Naive thymus-derived CD4-positive, alpha-beta T cell (primary cell): ENCODE measurements at regions of chr11 and their contacts with region 1.

Region 1: GRCh38 chr11:66344550-66345315 is at the start of gene BRMS1:
- DNase-seq: peak; percentile 85 to 98 (median 93)
- ATAC-seq: peak; percentile 94
- H3K4me3 ChIP-seq: peak within 1 kb of the TSS; percentile 73
- H3K4me3 Mint-ChIP-seq: peak within 1 kb of the TSS; percentile 94 to 98 (median 96)
- H3K27ac ChIP-seq: peak within 1 kb of the TSS; percentile 92
- H3K27ac Mint-ChIP-seq: peak within 1 kb of the TSS; percentile 91 to 98 (median 96)
- H3K4me1 ChIP-seq: peaks cover 30 to 36% of the 10 kb centered on the region in 2 donors
- H3K4me1 Mint-ChIP-seq: peaks cover 25 to 62% (median 52%) of the 10 kb centered on the region in 7 donors
- H3K27me3 ChIP-seq: no peaks in the 10 kb centered on the region
- H3K27me3 Mint-ChIP-seq: peaks cover 0 to 4% (median 0%) of the 10 kb centered on the region in 5 donors
- total RNA-seq, gene BRMS1: 35.9 to 50.8 (median 48.4) TPM

Region 2: DNA sequence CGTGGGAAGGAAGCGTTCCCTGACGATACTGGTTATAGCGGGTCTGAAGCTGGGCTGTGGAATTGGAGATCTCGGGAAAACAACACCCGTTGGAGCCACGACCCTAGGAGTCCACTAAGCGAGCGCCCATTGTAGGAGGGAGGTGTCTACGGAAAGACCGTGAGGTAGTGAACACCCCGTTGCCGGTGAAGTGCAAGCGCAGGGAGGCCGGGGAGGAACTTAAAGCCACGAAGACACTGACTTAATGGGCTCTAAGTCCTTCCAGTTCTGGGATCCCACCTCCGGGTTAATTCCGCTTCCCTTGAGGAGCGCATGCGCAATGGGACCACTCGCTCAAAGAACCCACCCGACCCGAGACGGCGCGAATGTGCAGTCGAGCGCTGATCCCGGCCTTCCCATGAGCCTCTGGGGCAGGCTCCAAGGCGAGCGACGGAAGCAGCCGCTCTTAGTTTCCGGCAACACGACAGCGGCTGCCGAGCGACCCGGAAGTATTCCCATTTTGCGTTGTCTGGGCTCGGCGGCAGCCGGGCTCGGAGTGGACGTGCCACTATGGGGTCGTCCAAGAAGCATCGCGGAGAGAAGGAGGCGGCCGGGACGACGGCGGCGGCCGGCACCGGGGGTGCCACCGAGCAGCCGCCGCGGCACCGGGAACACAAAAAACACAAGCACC is 383.4 kb before region 1 on chr11 and contains the start of gene SART1:
- CTCF ChIA-PET with region 1: no interaction called
- POLR2A ChIA-PET with region 1: no interaction called
- intact Hi-C with region 1: no loop called
- DNase-seq: peak; percentile 81 to 97 (median 94)
- ATAC-seq: peak; percentile 96
- H3K4me3 ChIP-seq: peak within 1 kb of the TSS; percentile 83
- H3K4me3 Mint-ChIP-seq: peak within 1 kb of the TSS; percentile 93 to 99 (median 98)
- H3K27ac ChIP-seq: peak within 1 kb of the TSS; percentile 96
- H3K27ac Mint-ChIP-seq: peak within 1 kb of the TSS; percentile 96 to 99 (median 98)
- H3K4me1 ChIP-seq: peaks cover 27 to 38% of the 10 kb centered on the region in 2 donors
- H3K4me1 Mint-ChIP-seq: peaks cover 23 to 64% (median 54%) of the 10 kb centered on the region in 7 donors
- H3K27me3 ChIP-seq: no peaks in the 10 kb centered on the region
- H3K27me3 Mint-ChIP-seq: no peaks in the 10 kb centered on the region
- total RNA-seq, gene SART1: 65.9 to 102 (median 90.8) TPM

Region 3: GRCh38 chr11:66317723-66318599 is 26.8 kb before region 1 on chr11:
- CTCF ChIA-PET with region 1: interaction called, 40 read pairs
- POLR2A ChIA-PET with region 1: interaction called, 68 read pairs
- intact Hi-C with region 1: loop called in 1 of 2 experiments (anchors 1 kb)
- DNase-seq: peak in 7 of 9 donors; percentile 79 to 96 (median 86)
- ATAC-seq: peak; percentile 93
- H3K4me3 ChIP-seq: peak overlapping the region; percentile 54
- H3K4me3 Mint-ChIP-seq: peak overlapping the region; percentile 45 to 89 (median 83)
- H3K27ac ChIP-seq: peak overlapping the region; percentile 99
- H3K27ac Mint-ChIP-seq: peak overlapping the region; percentile 88 to 100 (median 99)
- H3K4me1 ChIP-seq: peaks cover 32 to 60% of the 10 kb centered on the region in 2 donors
- H3K4me1 Mint-ChIP-seq: peaks cover 39 to 78% (median 63%) of the 10 kb centered on the region in 7 donors
- H3K27me3 ChIP-seq: no peaks in the 10 kb centered on the region
- H3K27me3 Mint-ChIP-seq: peaks cover 0 to 9% (median 0%) of the 10 kb centered on the region in 5 donors

Region 4: GRCh38 chr11:66371627-66372415 is 27.1 kb after region 1 on chr11 and contains the start of gene SLC29A2:
- CTCF ChIA-PET with region 1: interaction called, 3 read pairs
- POLR2A ChIA-PET with region 1: interaction called, 58 read pairs
- intact Hi-C with region 1: loop called (anchors 1 kb)
- DNase-seq: peak; percentile 53 to 85 (median 80)
- ATAC-seq: peak; percentile 89
- H3K4me3 ChIP-seq: peak within 1 kb of the TSS; percentile 72
- H3K4me3 Mint-ChIP-seq: peak within 1 kb of the TSS; percentile 81 to 96 (median 88)
- H3K27ac ChIP-seq: peak within 1 kb of the TSS; percentile 83
- H3K27ac Mint-ChIP-seq: peak within 1 kb of the TSS; percentile 79 to 95 (median 90)
- H3K4me1 ChIP-seq: peaks cover 4 to 8% of the 10 kb centered on the region in 2 donors
- H3K4me1 Mint-ChIP-seq: peaks cover 0 to 24% (median 13%) of the 10 kb centered on the region in 7 donors
- H3K27me3 ChIP-seq: no peaks in the 10 kb centered on the region
- H3K27me3 Mint-ChIP-seq: peaks cover 0 to 3% (median 0%) of the 10 kb centered on the region in 5 donors
- total RNA-seq, gene SLC29A2: 6.0 to 18.9 (median 12.0) TPM

Region 5: DNA sequence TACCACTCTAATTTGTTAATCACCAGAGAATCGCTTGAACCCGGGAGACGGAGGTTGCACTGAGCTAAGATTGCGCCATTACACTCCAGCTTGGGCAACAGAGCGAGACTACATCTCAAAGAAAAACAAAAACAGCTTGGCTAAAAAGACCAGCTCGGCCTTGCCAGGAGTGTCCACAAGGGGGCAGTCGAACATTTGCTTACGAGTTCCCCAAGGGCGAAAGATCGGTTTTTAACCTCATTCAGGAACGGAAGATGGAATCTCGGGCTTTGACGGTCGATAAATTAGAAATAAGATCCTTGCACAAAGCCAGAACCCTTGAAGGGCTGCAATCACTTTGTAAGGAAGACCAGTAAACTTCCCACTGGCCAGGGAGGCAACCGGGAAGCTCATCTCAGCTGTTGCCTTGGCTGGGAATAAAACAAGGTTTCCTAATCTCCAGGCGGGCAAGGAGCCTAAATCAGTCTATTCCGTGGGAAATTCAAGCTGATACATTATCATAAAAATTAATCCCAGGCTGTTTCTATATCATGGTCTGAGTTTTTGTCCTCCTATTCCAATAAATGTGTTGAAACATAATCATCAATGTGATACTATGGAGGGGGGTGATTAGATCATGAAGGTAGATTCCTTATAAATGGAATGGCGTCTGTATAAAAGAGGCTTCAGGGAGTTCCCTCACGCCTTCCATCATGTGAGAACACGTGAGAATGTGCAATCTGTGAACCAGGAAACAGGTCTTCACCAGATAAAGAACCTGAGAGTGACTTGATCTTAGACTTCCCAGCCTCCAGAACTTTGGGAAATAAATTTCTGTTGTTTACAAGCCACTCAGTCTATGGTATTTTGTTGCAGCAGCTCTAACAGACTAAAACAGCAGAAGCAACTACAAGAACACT is 41.7 kb after region 1 on chr11:
- CTCF ChIA-PET with region 1: interaction called, 14 read pairs
- POLR2A ChIA-PET with region 1: interaction called, 4 read pairs
- intact Hi-C with region 1: loop called (anchors 1 to 5 kb)
- DNase-seq: peak; percentile 59 to 83 (median 75)
- ATAC-seq: peak; percentile 83
- H3K4me3 ChIP-seq: no peak overlapping the region
- H3K4me3 Mint-ChIP-seq: peak overlapping the region; percentile 5 to 71 (median 40)
- H3K27ac ChIP-seq: no peak overlapping the region
- H3K27ac Mint-ChIP-seq: peak overlapping the region in 4 of 9 donors; percentile 0 to 20 (median 6)
- H3K4me1 ChIP-seq: peaks cover 4 to 8% of the 10 kb centered on the region in 2 donors
- H3K4me1 Mint-ChIP-seq: peaks cover 0 to 12% (median 7%) of the 10 kb centered on the region in 7 donors
- H3K27me3 ChIP-seq: no peaks in the 10 kb centered on the region
- H3K27me3 Mint-ChIP-seq: peaks cover 0 to 15% (median 0%) of the 10 kb centered on the region in 5 donors

Region 6: DNA sequence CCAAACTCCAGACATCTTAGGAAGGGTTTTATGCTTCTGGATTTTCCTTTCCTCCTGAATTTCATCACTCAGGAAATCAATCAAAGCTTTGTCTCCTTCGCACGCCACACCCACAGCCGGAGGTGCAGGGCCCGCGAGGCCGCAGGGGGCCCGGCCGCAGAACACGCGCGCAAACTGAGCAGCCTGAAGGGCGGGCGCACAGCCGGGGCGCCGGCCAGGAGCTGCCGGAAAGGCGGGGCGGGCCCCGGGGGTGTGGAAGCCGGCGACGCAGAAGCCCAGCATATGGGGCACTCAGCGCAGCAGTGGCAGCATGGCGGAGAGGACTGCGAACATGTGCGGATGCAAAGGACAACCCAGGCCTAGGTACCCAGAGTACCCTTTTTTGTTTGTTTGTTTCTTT is 417.4 kb after region 1 on chr11:
- CTCF ChIA-PET with region 1: no interaction called
- POLR2A ChIA-PET with region 1: no interaction called
- intact Hi-C with region 1: no loop called
- DNase-seq: no peak
- ATAC-seq: no peak
- H3K4me3 ChIP-seq: no peak overlapping the region
- H3K4me3 Mint-ChIP-seq: no peak overlapping the region
- H3K27ac ChIP-seq: no peak overlapping the region
- H3K27ac Mint-ChIP-seq: no peak overlapping the region
- H3K4me1 ChIP-seq: no peaks in the 10 kb centered on the region
- H3K4me1 Mint-ChIP-seq: no peaks in the 10 kb centered on the region
- H3K27me3 ChIP-seq: no peaks in the 10 kb centered on the region
- H3K27me3 Mint-ChIP-seq: no peaks in the 10 kb centered on the region